MCF 10A (cell line): ENCODE measurements at regions of chr1 and their contacts with region 1.

Region 1: DNA sequence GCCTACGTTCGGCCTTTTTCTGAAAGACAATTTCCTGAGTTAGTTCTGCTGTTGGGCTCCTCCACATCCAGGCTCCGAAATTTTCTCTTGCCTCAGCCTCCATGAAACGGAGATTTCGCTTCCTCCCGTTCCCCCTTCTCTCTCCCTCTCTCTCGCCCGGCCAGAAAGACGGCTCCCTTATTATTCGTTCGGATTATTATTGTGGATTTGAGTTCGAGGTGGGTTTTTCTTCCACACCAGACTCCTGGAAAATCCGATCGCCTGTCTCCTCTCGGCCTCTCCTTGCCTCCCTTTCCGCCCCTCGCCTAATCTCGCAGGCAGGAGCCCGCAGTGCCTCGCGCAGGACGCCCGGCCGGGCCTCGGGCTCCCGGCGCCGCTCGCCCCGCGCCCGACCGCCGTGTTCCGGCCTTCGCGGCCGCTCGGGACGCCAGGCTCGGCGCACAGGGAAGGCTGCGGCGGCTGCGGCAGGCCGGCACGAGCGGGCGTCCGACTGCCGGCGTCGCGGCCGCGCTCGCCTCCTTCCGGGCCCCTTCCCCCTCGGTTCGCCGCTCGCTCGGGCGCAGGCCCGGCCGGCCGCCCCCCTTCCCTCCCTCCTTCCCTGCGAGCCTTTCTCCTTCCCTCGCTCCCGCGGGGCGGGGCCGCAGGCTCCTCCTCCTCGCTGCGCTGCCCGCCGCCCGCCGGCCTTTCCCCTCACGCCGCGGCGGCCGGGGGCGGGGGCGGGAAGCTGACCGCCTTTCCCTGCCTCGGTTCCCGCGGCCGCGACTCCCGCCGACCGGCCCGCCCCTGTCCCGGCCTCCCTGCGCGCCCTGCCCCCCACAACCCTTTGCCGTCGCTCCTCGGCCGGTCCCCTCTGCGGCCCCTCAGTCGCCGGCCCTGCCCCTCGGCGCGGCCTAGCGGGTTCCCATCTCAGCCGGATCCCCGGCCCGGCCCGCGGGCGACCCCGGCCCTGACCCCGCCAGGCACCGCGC is at the start of gene ARHGEF11:
- DNase-seq: peak; percentile 95
- H3K4me3 Mint-ChIP-seq: peak within 1 kb of the TSS; percentile 95
- H3K27ac Mint-ChIP-seq: peak within 1 kb of the TSS; percentile 91
- H3K4me1 Mint-ChIP-seq: peaks cover 44% of the 10 kb centered on the region
- H3K27me3 Mint-ChIP-seq: peaks cover 13% of the 10 kb centered on the region
- CTCF ChIP-seq: no peak
- total RNA-seq, gene ARHGEF11: 34.5 and 38.5 TPM in 2 replicates

Region 2: DNA sequence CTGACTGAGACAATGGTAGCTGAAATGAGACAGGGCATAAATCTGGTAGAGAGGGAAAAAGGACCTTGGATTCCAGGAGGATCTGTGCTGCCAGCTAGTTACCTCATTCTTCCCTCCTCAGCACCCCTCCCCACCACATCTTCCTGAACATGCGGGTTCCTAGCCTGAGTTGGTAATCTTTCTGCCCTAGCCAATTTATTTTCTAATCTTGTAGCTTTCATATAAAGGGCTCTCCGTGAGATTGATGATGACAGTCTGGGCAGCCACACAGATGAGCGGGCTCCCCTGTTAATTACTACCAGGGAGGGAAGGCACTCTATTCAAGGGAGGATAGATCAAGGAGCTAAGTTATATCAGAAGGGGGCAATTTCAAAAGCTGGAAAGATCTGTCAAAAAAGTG is 20.1 kb before region 1 on chr1:
- CTCF ChIA-PET with region 1: no interaction called
- POLR2A ChIA-PET with region 1: no interaction called
- intact Hi-C with region 1: loop called (anchors 1 kb)
- DNase-seq: no peak
- H3K4me3 Mint-ChIP-seq: no peak overlapping the region
- H3K27ac Mint-ChIP-seq: no peak overlapping the region
- H3K4me1 Mint-ChIP-seq: peaks cover 8% of the 10 kb centered on the region
- H3K27me3 Mint-ChIP-seq: no peaks in the 10 kb centered on the region
- CTCF ChIP-seq: no peak

Region 3: DNA sequence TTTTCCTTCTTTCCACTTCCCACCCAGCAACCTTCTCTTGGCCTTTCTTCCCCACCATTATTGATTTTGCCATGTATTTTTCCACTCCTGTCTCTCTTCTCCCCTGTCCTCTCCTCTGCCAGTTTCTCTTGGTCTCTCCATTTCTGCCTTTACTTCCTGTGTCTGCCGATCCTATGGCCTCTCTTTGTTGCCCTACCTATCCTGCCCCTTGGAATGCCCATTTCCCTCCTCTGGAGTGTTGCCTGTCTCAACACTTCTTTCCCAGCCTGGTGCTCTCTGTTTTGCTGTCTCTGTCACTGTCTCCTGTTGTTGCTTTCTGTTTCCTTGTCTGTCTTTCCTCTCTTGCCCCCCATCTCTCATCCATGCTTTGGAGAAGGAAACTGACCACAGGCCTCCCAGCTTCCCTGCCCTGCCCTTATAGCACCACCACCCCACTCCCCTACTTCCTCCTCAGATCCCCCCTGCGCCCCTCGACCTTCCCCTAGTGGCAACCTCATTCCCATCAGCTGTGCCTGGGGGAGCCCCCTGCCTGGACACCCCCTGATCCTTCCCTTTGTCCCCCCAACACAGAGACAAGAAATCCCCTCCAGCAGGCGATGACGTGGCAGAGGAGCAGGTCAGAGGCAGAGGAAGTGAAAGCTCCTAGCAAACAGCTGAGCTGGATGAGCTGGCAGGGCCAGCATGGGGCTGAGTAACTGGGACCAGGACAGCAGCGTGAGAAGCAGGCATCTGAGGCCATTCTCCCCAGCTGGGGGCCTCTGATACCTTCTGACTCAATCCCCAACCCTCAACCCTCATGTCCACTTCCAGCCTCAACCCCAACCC is 60.7 kb after region 1 on chr1:
- CTCF ChIA-PET with region 1: no interaction called
- POLR2A ChIA-PET with region 1: no interaction called
- intact Hi-C with region 1: no loop called
- DNase-seq: peak; percentile 38
- H3K4me3 Mint-ChIP-seq: no peak overlapping the region
- H3K27ac Mint-ChIP-seq: no peak overlapping the region
- H3K4me1 Mint-ChIP-seq: peaks cover 9% of the 10 kb centered on the region
- H3K27me3 Mint-ChIP-seq: peaks cover 76% of the 10 kb centered on the region
- CTCF ChIP-seq: no peak